Activated CD4-positive, alpha-beta memory T cell treated with anti-CD3 and anti-CD28 coated beads for 36 hours (primary cell): ENCODE measurements at regions of chr7 and their contacts with region 1.

Region 1: DNA sequence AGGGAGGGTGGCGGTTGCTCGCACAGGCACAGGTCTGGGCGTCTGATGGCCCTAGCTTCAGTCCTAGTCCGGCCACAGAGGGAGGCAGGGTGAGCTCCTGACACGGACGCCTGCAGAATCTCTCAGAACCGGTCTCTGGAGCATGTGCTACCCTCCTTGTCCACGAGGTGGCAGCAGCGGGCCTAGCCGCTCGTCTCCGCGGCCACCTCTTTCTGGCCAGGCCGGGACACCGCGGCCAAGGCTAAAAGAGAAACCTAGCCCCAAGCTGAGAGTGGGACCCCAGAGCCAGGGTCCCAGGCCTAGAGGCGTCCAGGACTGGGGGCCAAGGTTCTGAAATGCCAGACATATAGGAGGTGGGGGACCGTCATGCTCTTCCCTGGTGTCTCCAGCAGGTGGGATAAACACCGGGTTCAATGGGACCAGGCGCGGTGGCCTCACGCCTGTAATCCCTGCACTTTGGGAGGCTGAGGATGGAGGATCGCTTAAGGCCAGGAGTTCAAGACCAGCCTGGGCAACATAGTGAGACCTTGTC is 3.2 kb upstream of the LAT2 start:
- DNase-seq: peak; percentile 85
- H3K4me3 Mint-ChIP-seq: peak overlapping the region; percentile 20
- H3K27ac Mint-ChIP-seq: no peak overlapping the region
- H3K4me1 Mint-ChIP-seq: peaks cover 6% of the 10 kb centered on the region
- H3K27me3 Mint-ChIP-seq: no peaks in the 10 kb centered on the region

Region 2: GRCh38 chr7:74068393-74069085 is 138.1 kb before region 1 on chr7:
- CTCF ChIA-PET with region 1: interaction called, 7 read pairs
- POLR2A ChIA-PET with region 1: interaction called, 3 read pairs
- intact Hi-C with region 1: loop called (anchors 2 kb)
- DNase-seq: no peak
- H3K4me3 Mint-ChIP-seq: no peak overlapping the region
- H3K27ac Mint-ChIP-seq: no peak overlapping the region
- H3K4me1 Mint-ChIP-seq: no peaks in the 10 kb centered on the region
- H3K27me3 Mint-ChIP-seq: no peaks in the 10 kb centered on the region

Region 3: GRCh38 chr7:74183613-74184450 is 22.8 kb before region 1 on chr7:
- CTCF ChIA-PET with region 1: interaction called, 15 read pairs
- POLR2A ChIA-PET with region 1: no interaction called
- intact Hi-C with region 1: no loop called
- DNase-seq: peak; percentile 49
- H3K4me3 Mint-ChIP-seq: no peak overlapping the region
- H3K27ac Mint-ChIP-seq: peak overlapping the region; percentile 74
- H3K4me1 Mint-ChIP-seq: peaks cover 78% of the 10 kb centered on the region
- H3K27me3 Mint-ChIP-seq: no peaks in the 10 kb centered on the region

Region 4: GRCh38 chr7:74217455-74218342 is 11.0 kb after region 1 on chr7:
- CTCF ChIA-PET with region 1: interaction called, 32 read pairs
- POLR2A ChIA-PET with region 1: no interaction called
- intact Hi-C with region 1: no loop called
- DNase-seq: peak; percentile 36
- H3K4me3 Mint-ChIP-seq: no peak overlapping the region
- H3K27ac Mint-ChIP-seq: no peak overlapping the region
- H3K4me1 Mint-ChIP-seq: peaks cover 14% of the 10 kb centered on the region
- H3K27me3 Mint-ChIP-seq: no peaks in the 10 kb centered on the region

Region 5: DNA sequence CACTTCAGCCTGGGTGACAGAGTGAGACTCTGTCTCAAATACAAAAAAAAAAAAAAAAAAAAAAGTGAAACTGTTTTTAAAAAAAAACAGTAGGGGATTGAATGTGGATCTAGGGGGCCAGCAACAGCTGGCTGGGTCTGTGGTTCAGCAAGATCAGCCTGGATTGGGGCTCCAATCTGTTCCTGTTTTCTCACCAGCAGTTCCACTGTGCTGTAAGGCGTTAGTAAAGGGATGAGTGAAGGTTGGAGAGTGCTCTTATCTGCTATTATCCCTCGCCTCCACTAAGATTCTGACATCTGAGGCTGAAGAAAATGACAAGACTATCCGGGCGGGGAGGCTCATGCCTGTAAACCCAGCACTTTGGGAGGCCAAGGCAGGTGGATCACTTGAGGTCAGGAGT is 205.4 kb after region 1 on chr7:
- CTCF ChIA-PET with region 1: interaction called, 20 read pairs
- POLR2A ChIA-PET with region 1: interaction called, 3 read pairs
- intact Hi-C with region 1: no loop called
- DNase-seq: no peak
- H3K4me3 Mint-ChIP-seq: no peak overlapping the region
- H3K27ac Mint-ChIP-seq: no peak overlapping the region
- H3K4me1 Mint-ChIP-seq: no peaks in the 10 kb centered on the region
- H3K27me3 Mint-ChIP-seq: no peaks in the 10 kb centered on the region